BJ (cell line): ENCODE measurements at regions of chr17 and their contacts with region 1.

Region 1: GRCh38 chr17:4229627-4230541 is 33.9 kb downstream of the ANKFY1 start:
- DNase-seq: peak; percentile 99
- H3K4me3 ChIP-seq: no peak overlapping the region
- H3K27me3 ChIP-seq: no peaks in the 10 kb centered on the region
- CTCF ChIP-seq: no peak

Region 2: DNA sequence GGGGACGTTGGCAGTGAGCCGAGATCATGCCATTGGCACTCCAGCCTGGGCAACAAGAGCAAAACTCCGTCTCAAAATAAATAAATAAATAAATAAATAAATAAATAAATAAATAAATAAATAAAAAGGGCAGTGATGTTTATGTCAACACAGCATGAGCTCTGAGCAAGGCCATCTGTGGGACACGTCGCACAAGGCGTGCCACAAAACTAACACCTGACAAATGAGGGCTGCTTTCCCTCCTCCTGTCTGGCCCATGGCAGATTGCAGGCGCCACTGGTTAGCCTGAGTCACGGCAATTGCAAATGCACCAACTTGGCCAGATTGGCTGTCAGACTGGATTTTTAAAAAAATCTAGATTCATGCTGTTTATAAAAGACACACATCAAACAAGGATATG is 178.0 kb after region 1 on chr17:
- CTCF ChIA-PET with region 1: interaction called, 7 read pairs
- POLR2A ChIA-PET with region 1: interaction called, 17 read pairs
- DNase-seq: no peak
- H3K4me3 ChIP-seq: no peak overlapping the region
- H3K27me3 ChIP-seq: no peaks in the 10 kb centered on the region
- CTCF ChIP-seq: no peak

Region 3: GRCh38 chr17:4474093-4474492 is 244.2 kb after region 1 on chr17:
- CTCF ChIA-PET with region 1: no interaction called
- POLR2A ChIA-PET with region 1: no interaction called
- DNase-seq: no peak
- H3K4me3 ChIP-seq: no peak overlapping the region
- H3K27me3 ChIP-seq: peaks cover 10% of the 10 kb centered on the region
- CTCF ChIP-seq: no peak